ENCODE measurements at regions of chr9 and their contacts with region 1.

Region 1: GRCh38 chr9:34178520-34179212 is at the start of gene UBAP1:
- DNase-seq: peak; percentile 96 to 97
- ATAC-seq: peak; percentile 95 to 97
- H3K4me3 ChIP-seq: peak within 1 kb of the TSS; percentile 73 to 98 (median 90)
- H3K27ac ChIP-seq: peak within 1 kb of the TSS; percentile 93 to 99 (median 96)
- H3K4me1 ChIP-seq: peaks cover 9 to 17% of the 10 kb centered on the region in 2 donors
- H3K27me3 ChIP-seq: no peaks in the 10 kb centered on the region
- CTCF ChIP-seq: no peak
- POLR2A ChIP-seq: peak; percentile 90 to 97
- total RNA-seq, gene UBAP1: 69.5 to 162 (median 90.8) TPM

Region 2: GRCh38 chr9:34126207-34127034 is 52.2 kb before region 1 on chr9 and contains the start of gene DCAF12:
- in situ Hi-C with region 1: loop called in 1 of 4 experiments (anchors 10 kb)
- intact Hi-C with region 1: loop called (anchors 5 kb)
- DNase-seq: peak; percentile 81 to 86
- ATAC-seq: peak; percentile 96 to 98
- H3K4me3 ChIP-seq: peak within 1 kb of the TSS; percentile 69 to 99 (median 84)
- H3K27ac ChIP-seq: peak within 1 kb of the TSS; percentile 84 to 98 (median 90)
- H3K4me1 ChIP-seq: peaks cover 30 to 31% of the 10 kb centered on the region in 2 donors
- H3K27me3 ChIP-seq: no peaks in the 10 kb centered on the region
- CTCF ChIP-seq: peak in 1 of 5 experiments; percentile 23
- POLR2A ChIP-seq: peak; percentile 66 to 80
- total RNA-seq, gene DCAF12: 19.4 to 33.7 (median 26.7) TPM

Measured in gastrocnemius medialis (tissue), 4 donors.